ENCODE measurements at regions of chr9 and their contacts with region 1.

Region 1: GRCh38 chr9:12329623-12329985 is 363.6 kb upstream of the TYRP1 start:
- DNase-seq: no peak
- H3K4me3 Mint-ChIP-seq: no peak overlapping the region
- H3K27ac Mint-ChIP-seq: no peak overlapping the region
- H3K4me1 Mint-ChIP-seq: no peaks in the 10 kb centered on the region
- H3K27me3 Mint-ChIP-seq: no peaks in the 10 kb centered on the region

Region 2: DNA sequence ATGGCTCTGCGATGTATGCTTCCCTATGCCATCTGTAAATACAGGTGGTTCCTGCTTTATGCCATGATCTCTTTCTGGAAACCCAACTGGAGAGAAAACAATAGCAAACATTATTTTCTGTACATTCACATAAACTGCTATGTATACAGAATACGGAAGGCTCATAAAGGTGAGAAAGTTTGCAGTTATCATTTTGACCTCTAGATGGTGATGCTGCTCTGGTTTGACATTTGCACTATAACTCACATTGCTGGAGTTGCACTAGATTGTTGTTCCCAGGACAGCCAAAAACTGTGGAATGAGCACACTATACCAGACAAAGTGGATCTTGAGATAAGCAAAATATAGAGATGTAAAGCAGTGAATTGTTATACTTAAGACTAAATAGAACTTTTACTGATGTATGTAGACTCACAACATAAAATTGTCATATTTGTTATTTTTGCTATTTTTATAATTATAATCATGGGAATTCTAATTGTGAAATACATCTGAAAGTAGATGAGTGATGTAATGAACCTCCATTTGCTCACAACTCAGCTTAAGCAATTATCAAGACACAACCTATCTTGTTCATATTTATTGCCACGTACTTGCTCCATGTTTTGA is 1963.3 kb before region 1 on chr9:
- intact Hi-C with region 1: loop called (anchors 5 kb)
- DNase-seq: no peak
- H3K4me3 Mint-ChIP-seq: no peak overlapping the region
- H3K27ac Mint-ChIP-seq: no peak overlapping the region
- H3K4me1 Mint-ChIP-seq: no peaks in the 10 kb centered on the region
- H3K27me3 Mint-ChIP-seq: no peaks in the 10 kb centered on the region